ENCODE measurements at regions of chr1 and their contacts with region 1.

Region 1: DNA sequence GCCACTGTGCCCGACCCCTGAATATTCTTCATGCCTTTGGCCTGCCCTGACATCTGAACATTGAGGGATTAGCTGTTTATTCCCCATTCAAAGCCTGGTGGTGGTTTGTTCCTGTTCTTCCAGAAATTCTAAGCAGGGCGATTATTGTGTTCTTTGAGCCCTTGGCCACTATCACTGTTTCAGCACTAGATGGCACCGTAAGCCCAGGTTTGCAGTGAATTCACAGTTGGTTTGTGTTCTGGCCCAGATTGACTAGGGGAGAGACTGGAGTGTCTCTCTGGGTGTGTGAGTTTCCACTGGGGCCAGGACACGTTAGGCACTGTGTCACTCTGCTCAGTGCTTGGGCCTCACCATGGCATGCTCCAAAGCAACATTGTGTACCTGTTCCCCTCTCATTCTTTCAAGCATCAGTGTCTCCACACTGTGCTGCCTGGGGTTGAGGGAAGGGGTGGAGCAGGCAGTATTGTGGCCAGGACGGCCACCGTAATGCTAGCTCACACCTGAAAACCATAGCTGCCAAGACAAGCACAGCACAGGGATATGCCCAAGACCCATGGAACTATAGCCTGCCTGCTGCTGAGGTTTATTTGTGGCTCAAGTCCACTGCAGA is 52.7 kb downstream of the PKN2 start:
- DNase-seq: peak; percentile 54
- H3K4me3 ChIP-seq: no peak overlapping the region
- H3K27ac ChIP-seq: no peak overlapping the region
- H3K4me1 ChIP-seq: no peaks in the 10 kb centered on the region
- H3K27me3 ChIP-seq: no peaks in the 10 kb centered on the region
- CTCF ChIP-seq: peak; percentile 83

Region 2: GRCh38 chr1:88800382-88801051 is 63.8 kb after region 1 on chr1:
- CTCF ChIA-PET with region 1: no interaction called
- dilution Hi-C with region 1: no loop called
- in situ Hi-C with region 1: no loop called
- intact Hi-C with region 1: loop called (anchors 5 kb)
- DNase-seq: no peak
- H3K4me3 ChIP-seq: no peak overlapping the region
- H3K27ac ChIP-seq: no peak overlapping the region
- H3K4me1 ChIP-seq: peaks cover 12% of the 10 kb centered on the region
- H3K27me3 ChIP-seq: no peaks in the 10 kb centered on the region
- CTCF ChIP-seq: peak; percentile 37 to 56

Region 3: GRCh38 chr1:88877382-88877825 is 140.7 kb after region 1 on chr1:
- CTCF ChIA-PET with region 1: interaction called, 9 read pairs
- dilution Hi-C with region 1: no loop called
- in situ Hi-C with region 1: loop called in 1 of 2 experiments (anchors 10 kb)
- intact Hi-C with region 1: loop called (anchors 1 kb)
- DNase-seq: peak; percentile 53
- H3K4me3 ChIP-seq: no peak overlapping the region
- H3K27ac ChIP-seq: peak overlapping the region; percentile 55
- H3K4me1 ChIP-seq: no peaks in the 10 kb centered on the region
- H3K27me3 ChIP-seq: no peaks in the 10 kb centered on the region
- CTCF ChIP-seq: peak; percentile 28 to 42

Region 4: GRCh38 chr1:88935522-88936222 is 198.9 kb after region 1 on chr1:
- CTCF ChIA-PET with region 1: no interaction called
- dilution Hi-C with region 1: no loop called
- in situ Hi-C with region 1: no loop called
- intact Hi-C with region 1: loop called (anchors 2 kb)
- DNase-seq: no peak
- H3K4me3 ChIP-seq: no peak overlapping the region
- H3K27ac ChIP-seq: no peak overlapping the region
- H3K4me1 ChIP-seq: no peaks in the 10 kb centered on the region
- H3K27me3 ChIP-seq: no peaks in the 10 kb centered on the region
- CTCF ChIP-seq: peak; percentile 58 to 63

Region 5: DNA sequence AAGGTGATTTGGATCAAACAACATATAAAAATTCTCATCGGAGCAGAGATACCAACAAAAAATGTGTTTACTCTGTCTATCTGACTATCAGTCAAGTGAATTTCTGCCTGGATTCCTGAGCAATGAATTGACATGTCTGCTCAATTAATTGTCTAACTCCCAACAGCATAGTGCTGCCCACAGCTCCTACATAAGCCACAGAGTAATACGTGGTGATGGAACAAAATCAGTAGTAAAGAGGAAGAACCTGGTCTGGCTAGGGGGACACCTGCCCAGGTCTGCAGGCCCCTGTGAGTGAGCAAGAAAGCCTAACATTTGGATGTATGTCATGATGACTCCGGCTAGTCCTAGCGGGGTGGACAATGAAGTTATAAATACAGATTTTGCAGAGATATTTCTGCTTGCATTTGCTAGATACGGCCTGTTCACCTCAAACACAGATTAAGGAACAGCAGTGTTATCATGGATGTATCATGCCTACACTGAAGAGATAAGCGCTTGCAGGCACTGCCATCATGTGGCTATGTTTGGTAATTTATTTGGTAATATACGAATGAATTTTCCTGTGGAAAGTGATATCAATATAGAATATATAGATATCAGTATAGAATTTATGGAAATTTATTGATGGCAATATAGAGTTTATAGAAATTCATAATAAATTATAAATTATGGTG is 718.2 kb after region 1 on chr1:
- CTCF ChIA-PET with region 1: no interaction called
- dilution Hi-C with region 1: no loop called
- in situ Hi-C with region 1: no loop called
- intact Hi-C with region 1: loop called (anchors 5 kb)
- DNase-seq: peak; percentile 66
- H3K4me3 ChIP-seq: no peak overlapping the region
- H3K27ac ChIP-seq: peak overlapping the region; percentile 36
- H3K4me1 ChIP-seq: peaks cover 39% of the 10 kb centered on the region
- H3K27me3 ChIP-seq: no peaks in the 10 kb centered on the region
- CTCF ChIP-seq: peak; percentile 50 to 64